ENCODE measurements at regions of chr20 and their contacts with region 1.

Region 1: GRCh38 chr20:5056801-5057599 is 55.7 kb upstream of the SLC23A2 start:
- DNase-seq: peak; percentile 64
- CTCF ChIP-seq: peak; percentile 33

Region 2: DNA sequence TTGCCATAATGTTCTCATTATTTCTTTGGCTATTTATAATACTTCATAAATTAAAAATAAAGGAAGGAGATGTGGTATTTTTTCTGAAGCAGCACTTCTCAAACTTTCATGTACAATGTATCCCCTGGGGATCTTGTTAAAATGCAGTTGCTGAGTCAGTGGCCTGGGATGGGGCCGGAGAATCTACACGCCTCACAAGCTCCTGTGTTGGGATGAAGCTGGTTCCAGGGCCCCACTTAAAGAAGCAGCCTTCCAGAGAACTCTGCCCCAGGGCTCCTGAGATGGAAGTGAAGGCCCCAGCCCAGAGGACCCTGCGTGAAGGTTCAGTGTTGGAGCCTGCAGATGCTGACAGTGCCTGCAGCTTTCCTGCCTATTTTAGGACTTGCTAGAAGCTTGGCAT is 15.6 kb before region 1 on chr20:
- CTCF ChIA-PET with region 1: interaction called, 21 read pairs
- POLR2A ChIA-PET with region 1: no interaction called
- DNase-seq: no peak
- CTCF ChIP-seq: no peak

Region 3: GRCh38 chr20:5072756-5073659 is 16.0 kb after region 1 on chr20:
- CTCF ChIA-PET with region 1: interaction called, 10 read pairs
- POLR2A ChIA-PET with region 1: no interaction called
- DNase-seq: no peak
- CTCF ChIP-seq: no peak

Region 4: GRCh38 chr20:5430670-5431069 is 373.7 kb after region 1 on chr20:
- CTCF ChIA-PET with region 1: no interaction called
- POLR2A ChIA-PET with region 1: no interaction called
- DNase-seq: no peak
- CTCF ChIP-seq: no peak

Measured in GM10248 (cell line).